ENCODE measurements at regions of chr12 and their contacts with region 1.

Region 1: GRCh38 chr12:132414634-132415326 is 75.2 kb upstream of the FBRSL1 start:
- DNase-seq: peak; percentile 87
- ATAC-seq: peak; percentile 96
- H3K4me3 Mint-ChIP-seq: no peak overlapping the region
- H3K27ac Mint-ChIP-seq: no peak overlapping the region
- H3K4me1 Mint-ChIP-seq: no peaks in the 10 kb centered on the region
- H3K27me3 Mint-ChIP-seq: no peaks in the 10 kb centered on the region

Region 2: DNA sequence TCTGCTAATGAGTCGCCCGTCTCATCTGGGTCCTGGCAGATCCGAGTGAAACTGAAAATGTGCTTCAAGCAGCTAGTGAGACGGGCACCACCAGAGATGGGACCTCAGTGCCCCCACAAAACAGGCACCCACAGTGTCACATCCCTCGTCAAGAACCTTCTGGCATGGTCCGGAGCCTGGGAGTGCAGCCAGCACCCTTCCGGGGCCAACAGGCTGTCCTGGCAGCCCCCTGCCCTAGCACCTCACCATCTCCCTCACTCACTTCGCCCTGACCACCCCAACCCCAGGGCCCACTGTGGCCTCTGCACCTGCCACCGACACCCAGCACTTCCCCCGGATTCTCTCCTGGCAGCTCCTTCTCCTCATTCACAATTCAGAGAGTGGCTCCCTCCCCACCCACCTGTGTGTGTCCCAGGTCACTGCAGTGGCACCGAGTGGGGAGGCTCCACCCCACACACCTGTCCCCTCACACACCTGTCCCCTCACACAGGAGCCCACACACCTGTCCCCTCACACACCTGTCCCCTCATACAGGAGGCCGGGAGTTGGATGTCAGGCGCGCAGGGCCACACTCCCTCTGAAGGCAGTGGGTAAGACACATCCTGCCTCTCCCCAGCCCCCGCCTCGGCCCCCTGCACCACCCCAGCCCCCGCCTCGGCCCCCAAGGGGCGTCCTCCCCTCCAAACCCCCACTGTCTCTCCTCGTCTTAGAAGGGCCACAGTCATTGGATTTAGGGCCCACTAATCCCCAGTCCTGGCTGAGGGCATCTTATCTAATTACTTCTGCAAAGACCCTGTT is 93.3 kb before region 1 on chr12:
- CTCF ChIA-PET with region 1: no interaction called
- POLR2A ChIA-PET with region 1: no interaction called
- intact Hi-C with region 1: no loop called
- DNase-seq: no peak
- ATAC-seq: no peak
- H3K4me3 Mint-ChIP-seq: no peak overlapping the region
- H3K27ac Mint-ChIP-seq: no peak overlapping the region
- H3K4me1 Mint-ChIP-seq: peaks cover 14% of the 10 kb centered on the region
- H3K27me3 Mint-ChIP-seq: peaks cover 25% of the 10 kb centered on the region

Region 3: GRCh38 chr12:132367071-132367851 is 47.5 kb before region 1 on chr12:
- CTCF ChIA-PET with region 1: no interaction called
- POLR2A ChIA-PET with region 1: no interaction called
- intact Hi-C with region 1: no loop called
- DNase-seq: no peak
- ATAC-seq: no peak
- H3K4me3 Mint-ChIP-seq: no peak overlapping the region
- H3K27ac Mint-ChIP-seq: no peak overlapping the region
- H3K4me1 Mint-ChIP-seq: no peaks in the 10 kb centered on the region
- H3K27me3 Mint-ChIP-seq: peaks cover 24% of the 10 kb centered on the region

Region 4: GRCh38 chr12:132517013-132517739 is 102.4 kb after region 1 on chr12:
- CTCF ChIA-PET with region 1: interaction called, 25 read pairs
- POLR2A ChIA-PET with region 1: no interaction called
- intact Hi-C with region 1: no loop called
- DNase-seq: no peak
- ATAC-seq: no peak
- H3K4me3 Mint-ChIP-seq: no peak overlapping the region
- H3K27ac Mint-ChIP-seq: no peak overlapping the region
- H3K4me1 Mint-ChIP-seq: peaks cover 3% of the 10 kb centered on the region
- H3K27me3 Mint-ChIP-seq: no peaks in the 10 kb centered on the region

Region 5: GRCh38 chr12:132523576-132524331 is 109.0 kb after region 1 on chr12:
- CTCF ChIA-PET with region 1: interaction called, 25 read pairs
- POLR2A ChIA-PET with region 1: no interaction called
- intact Hi-C with region 1: loop called (anchors 1 kb)
- DNase-seq: peak; percentile 86
- ATAC-seq: peak; percentile 86
- H3K4me3 Mint-ChIP-seq: no peak overlapping the region
- H3K27ac Mint-ChIP-seq: no peak overlapping the region
- H3K4me1 Mint-ChIP-seq: peaks cover 4% of the 10 kb centered on the region
- H3K27me3 Mint-ChIP-seq: no peaks in the 10 kb centered on the region

Region 6: DNA sequence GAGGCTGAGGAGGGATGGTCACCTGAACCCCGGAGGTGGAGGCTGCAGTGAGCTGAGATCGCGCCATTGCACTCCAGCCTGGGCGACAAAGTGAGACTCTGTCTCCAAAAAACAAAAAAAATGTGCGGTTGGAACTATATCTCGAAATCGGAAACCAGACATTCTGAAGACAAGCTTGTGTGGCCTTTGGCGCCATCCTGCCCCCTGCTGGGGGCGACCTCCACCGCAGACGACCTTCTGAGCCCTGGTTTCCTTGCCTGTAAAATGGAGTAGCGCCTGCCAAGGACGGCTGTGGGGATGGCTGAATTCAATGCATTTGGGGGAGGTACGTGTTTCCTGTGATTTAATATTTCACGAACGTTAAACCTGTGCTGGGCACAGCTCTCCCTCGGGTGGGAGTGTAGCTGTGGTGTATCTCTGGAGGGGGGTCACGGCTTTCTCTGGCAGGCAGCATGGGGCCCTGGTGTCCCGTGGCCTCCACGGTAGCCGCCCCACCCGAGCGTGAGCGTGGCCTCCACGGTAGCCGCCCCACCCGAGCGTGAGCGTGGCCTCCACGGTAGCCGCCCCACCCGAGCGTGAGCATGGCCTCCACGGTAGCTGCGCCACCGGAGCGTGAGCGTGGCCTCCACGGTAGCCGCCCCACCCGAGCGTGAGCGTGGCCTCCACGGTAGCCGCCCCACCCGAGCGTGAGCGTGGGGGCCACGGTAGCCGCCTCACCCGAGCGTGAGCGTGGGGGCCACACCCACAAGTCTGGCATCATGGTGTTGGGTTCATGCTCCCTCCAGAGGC is 140.3 kb after region 1 on chr12:
- CTCF ChIA-PET with region 1: interaction called, 10 read pairs
- POLR2A ChIA-PET with region 1: no interaction called
- intact Hi-C with region 1: loop called in 1 of 2 experiments (anchors 2 kb)
- DNase-seq: peak; percentile 64
- ATAC-seq: no peak
- H3K4me3 Mint-ChIP-seq: no peak overlapping the region
- H3K27ac Mint-ChIP-seq: no peak overlapping the region
- H3K4me1 Mint-ChIP-seq: peaks cover 9% of the 10 kb centered on the region
- H3K27me3 Mint-ChIP-seq: peaks cover 7% of the 10 kb centered on the region

Region 7: DNA sequence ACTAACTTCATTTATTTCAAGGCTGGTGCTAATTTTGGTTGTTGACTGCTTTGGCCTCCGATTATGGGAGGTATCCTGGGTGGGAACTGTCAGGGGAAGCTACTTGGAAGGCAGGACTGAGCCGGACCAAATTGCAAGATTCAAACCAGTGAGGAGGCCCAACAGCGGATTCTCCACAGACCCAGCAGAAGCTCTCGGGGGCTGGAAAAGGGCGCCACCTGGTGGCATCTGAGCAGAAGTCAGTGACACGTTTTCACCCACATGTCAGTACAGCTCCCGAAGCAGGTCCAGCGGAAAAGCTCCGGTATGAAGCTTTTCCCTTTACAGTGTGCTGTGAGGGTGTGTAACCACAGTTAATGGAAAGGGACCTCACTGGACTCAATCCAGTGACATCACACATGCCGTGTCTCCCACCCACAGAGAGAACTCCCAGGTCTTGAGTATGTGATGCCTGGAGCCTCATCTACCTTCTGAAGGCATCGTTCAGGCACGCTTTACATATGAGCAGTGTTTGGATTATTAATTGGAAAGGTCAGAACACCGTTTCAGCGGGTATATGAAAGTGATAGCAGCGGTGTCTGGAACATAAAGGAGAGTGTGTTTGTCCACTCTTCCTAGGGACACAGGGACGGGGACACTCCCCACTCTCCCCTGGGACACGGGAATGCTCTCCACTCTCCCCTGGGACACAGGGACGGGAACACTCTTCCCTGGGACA is 200.2 kb after region 1 on chr12:
- CTCF ChIA-PET with region 1: interaction called, 18 read pairs
- POLR2A ChIA-PET with region 1: no interaction called
- intact Hi-C with region 1: loop called (anchors 1 to 2 kb)
- DNase-seq: peak; percentile 90
- ATAC-seq: peak; percentile 91
- H3K4me3 Mint-ChIP-seq: no peak overlapping the region
- H3K27ac Mint-ChIP-seq: no peak overlapping the region
- H3K4me1 Mint-ChIP-seq: peaks cover 15% of the 10 kb centered on the region
- H3K27me3 Mint-ChIP-seq: peaks cover 33% of the 10 kb centered on the region